ENCODE measurements at regions of chr14 and their contacts with region 1.

Region 1: DNA sequence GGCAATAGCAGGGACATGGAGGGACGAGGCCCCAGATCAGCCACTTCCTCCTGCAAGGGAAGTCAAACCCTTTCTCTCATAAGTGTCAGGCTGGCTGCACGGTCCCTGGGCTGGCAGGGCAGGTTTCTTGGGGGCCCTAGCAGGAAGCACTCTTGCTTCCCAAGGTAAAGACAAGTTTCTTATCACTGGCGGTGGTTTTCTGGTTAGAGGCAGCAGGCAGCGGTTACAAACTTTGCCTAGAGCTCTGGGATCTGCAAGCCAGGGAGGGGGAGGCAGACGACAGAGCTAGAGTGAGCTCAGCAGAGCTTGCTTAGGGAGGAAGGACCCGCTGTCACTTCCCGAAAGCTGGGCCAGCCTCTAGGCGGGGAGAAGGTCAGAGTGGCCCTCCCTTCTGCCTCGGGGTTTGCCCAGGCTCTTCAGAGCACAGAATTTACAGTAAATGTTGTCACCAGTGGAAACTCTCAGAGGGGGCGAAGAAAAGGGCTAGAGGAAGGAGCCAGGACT is 20.4 kb downstream of the BATF start:
- DNase-seq: peak; percentile 83
- H3K4me3 Mint-ChIP-seq: peak overlapping the region; percentile 64
- H3K27ac Mint-ChIP-seq: peak overlapping the region; percentile 95
- H3K4me1 Mint-ChIP-seq: peaks cover 77% of the 10 kb centered on the region
- H3K27me3 Mint-ChIP-seq: no peaks in the 10 kb centered on the region

Region 2: DNA sequence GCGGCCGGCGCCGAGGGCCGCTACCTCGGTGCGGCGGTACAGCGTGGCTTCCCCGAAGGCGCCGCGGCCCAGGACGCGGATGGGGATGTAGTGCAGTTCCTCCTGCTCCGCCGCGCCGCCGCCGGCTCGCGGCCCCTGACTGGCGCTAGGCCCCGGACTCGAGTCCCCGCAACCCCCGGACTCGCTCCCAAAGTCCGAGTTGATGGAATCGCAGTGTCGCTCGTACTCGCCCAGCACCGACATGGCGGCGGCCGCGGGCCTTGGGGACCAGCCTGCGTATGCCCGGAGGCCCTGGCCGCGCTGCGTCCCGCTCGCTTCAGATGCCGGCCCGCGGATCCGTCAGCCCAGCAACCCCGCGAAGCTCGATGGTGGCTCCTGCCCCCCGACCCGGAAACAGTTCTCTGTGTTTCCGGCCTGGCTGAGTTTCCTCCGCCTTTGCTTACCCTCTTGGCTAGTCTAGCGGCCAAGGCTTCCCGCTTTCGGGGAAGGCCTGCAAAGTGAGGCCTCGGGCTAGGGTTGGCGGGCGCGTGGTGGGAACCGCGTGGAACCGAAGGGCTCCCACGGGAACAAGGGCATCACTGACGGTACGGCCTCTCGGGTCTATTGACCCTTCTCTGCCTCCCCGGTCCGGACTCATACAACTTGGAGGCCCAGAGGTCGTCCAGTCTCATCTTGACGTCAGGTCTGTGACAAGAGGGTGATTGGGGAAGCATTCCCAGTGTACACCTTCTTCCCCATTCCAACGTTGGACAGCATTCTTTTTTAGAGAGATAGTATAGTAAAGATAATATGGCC is 415.8 kb before region 1 on chr14 and contains the start of gene NEK9:
- intact Hi-C with region 1: loop called (anchors 5 kb)
- DNase-seq: peak; percentile 86
- H3K4me3 Mint-ChIP-seq: peak within 1 kb of the TSS; percentile 93
- H3K27ac Mint-ChIP-seq: peak within 1 kb of the TSS; percentile 97
- H3K4me1 Mint-ChIP-seq: peaks cover 39% of the 10 kb centered on the region
- H3K27me3 Mint-ChIP-seq: no peaks in the 10 kb centered on the region
- total RNA-seq, gene NEK9: 76.8 and 77.0 TPM in 2 replicates

Region 3: GRCh38 chr14:75497191-75497590 is 45.4 kb before region 1 on chr14:
- intact Hi-C with region 1: loop called (anchors 1 kb)
- DNase-seq: peak; percentile 58
- H3K4me3 Mint-ChIP-seq: peak overlapping the region; percentile 66
- H3K27ac Mint-ChIP-seq: peak overlapping the region; percentile 89
- H3K4me1 Mint-ChIP-seq: peaks cover 61% of the 10 kb centered on the region
- H3K27me3 Mint-ChIP-seq: no peaks in the 10 kb centered on the region

Region 4: GRCh38 chr14:75560962-75561432 is 18.4 kb after region 1 on chr14:
- intact Hi-C with region 1: loop called (anchors 1 kb)
- DNase-seq: no peak
- H3K4me3 Mint-ChIP-seq: peak overlapping the region; percentile 15
- H3K27ac Mint-ChIP-seq: peak overlapping the region; percentile 93
- H3K4me1 Mint-ChIP-seq: peaks cover 68% of the 10 kb centered on the region
- H3K27me3 Mint-ChIP-seq: no peaks in the 10 kb centered on the region

Region 5: GRCh38 chr14:75577729-75578101 is 35.1 kb after region 1 on chr14:
- intact Hi-C with region 1: loop called (anchors 1 kb)
- DNase-seq: peak; percentile 61
- H3K4me3 Mint-ChIP-seq: peak overlapping the region; percentile 83
- H3K27ac Mint-ChIP-seq: peak overlapping the region; percentile 71
- H3K4me1 Mint-ChIP-seq: peaks cover 22% of the 10 kb centered on the region
- H3K27me3 Mint-ChIP-seq: peaks cover 7% of the 10 kb centered on the region